Activated naive CD4-positive, alpha-beta T cell treated with anti-CD3 and anti-CD28 coated beads for 36 hours (primary cell): ENCODE measurements at regions of chr7 and their contacts with region 1.

Region 1: GRCh38 chr7:148914208-148914777 is 30.2 kb upstream of the EZH2 start:
- DNase-seq: peak; percentile 75
- H3K4me3 Mint-ChIP-seq: peak overlapping the region; percentile 61
- H3K27ac Mint-ChIP-seq: peak overlapping the region; percentile 96
- H3K4me1 Mint-ChIP-seq: peaks cover 71% of the 10 kb centered on the region
- H3K27me3 Mint-ChIP-seq: no peaks in the 10 kb centered on the region

Region 2: DNA sequence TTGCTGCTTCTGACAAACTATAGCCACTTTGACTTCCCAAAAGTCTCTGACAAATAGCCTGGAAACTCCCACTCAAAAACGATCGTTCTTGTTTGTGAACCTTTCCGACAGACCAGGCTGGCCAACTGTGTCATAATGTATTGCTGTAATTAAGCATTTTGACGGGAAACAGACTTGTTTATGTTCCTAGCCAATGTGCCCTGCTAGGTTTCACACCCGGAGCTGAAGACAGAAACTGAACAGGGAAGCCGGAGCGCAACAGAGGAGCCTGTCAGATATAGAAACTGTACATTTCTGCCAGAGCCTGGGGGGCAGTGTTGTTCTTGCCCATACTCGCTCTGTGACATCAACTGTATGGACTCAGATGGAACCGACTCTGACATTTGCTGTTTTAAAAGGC is 379.1 kb before region 1 on chr7:
- CTCF ChIA-PET with region 1: no interaction called
- intact Hi-C with region 1: loop called (anchors 1 kb)
- DNase-seq: peak; percentile 79
- H3K4me3 Mint-ChIP-seq: peak overlapping the region; percentile 69
- H3K27ac Mint-ChIP-seq: peak overlapping the region; percentile 76
- H3K4me1 Mint-ChIP-seq: peaks cover 10% of the 10 kb centered on the region
- H3K27me3 Mint-ChIP-seq: peaks cover 10% of the 10 kb centered on the region

Region 3: GRCh38 chr7:148727501-148728278 is 186.6 kb before region 1 on chr7:
- CTCF ChIA-PET with region 1: no interaction called
- intact Hi-C with region 1: loop called (anchors 1 kb)
- DNase-seq: peak; percentile 83
- H3K4me3 Mint-ChIP-seq: no peak overlapping the region
- H3K27ac Mint-ChIP-seq: peak overlapping the region; percentile 64
- H3K4me1 Mint-ChIP-seq: peaks cover 66% of the 10 kb centered on the region
- H3K27me3 Mint-ChIP-seq: no peaks in the 10 kb centered on the region

Region 4: DNA sequence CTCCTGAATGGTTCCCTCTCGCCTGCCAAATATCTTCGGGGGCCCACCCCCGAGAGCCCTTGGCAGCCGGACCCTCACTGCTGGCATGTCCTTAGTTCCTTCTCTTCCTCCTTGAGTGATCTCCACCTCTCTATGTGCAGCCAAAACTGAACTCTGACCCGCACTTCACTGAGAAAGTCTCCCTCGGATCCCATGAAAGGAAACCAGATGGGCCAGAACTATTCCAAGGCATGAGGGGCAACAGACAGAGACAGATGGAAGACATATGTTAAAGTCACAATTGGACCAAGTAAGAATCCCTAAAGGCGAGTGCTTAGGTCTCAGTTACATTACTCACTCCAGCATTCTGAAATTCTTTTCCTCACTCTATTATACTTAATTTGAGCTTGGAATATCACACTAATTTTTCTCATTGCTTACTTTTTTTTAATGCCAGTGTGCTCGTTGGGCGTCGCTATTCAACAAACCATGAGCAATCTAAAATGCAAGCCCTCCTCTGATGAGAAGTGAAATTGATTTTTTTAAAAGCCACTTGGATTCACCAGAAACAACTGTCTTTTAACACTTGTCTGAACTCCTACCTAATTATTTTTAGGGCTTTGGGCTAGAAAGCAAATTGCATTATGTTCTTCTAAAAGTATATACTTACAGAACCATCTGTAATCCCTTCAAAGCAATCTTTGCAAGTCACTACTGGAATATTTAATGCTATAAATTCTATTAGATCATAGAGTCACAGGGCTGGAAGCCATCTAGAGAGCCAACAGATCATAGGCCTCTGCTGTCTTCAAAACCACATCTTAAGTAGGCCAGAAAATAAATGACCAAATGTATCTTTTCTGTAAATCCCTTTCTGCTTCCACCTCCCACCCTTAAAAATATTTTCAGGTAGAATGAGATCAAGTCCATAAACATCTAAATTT is 13.1 kb after region 1 on chr7:
- CTCF ChIA-PET with region 1: interaction called, 22 read pairs
- intact Hi-C with region 1: loop called (anchors 1 kb)
- DNase-seq: no peak
- H3K4me3 Mint-ChIP-seq: peak overlapping the region; percentile 34
- H3K27ac Mint-ChIP-seq: peak overlapping the region; percentile 92
- H3K4me1 Mint-ChIP-seq: peaks cover 67% of the 10 kb centered on the region
- H3K27me3 Mint-ChIP-seq: no peaks in the 10 kb centered on the region

Region 5: GRCh38 chr7:148987010-148987750 is 72.9 kb after region 1 on chr7:
- CTCF ChIA-PET with region 1: no interaction called
- intact Hi-C with region 1: loop called (anchors 1 kb)
- DNase-seq: peak; percentile 88
- H3K4me3 Mint-ChIP-seq: peak overlapping the region; percentile 98
- H3K27ac Mint-ChIP-seq: peak overlapping the region; percentile 93
- H3K4me1 Mint-ChIP-seq: peaks cover 40% of the 10 kb centered on the region
- H3K27me3 Mint-ChIP-seq: peaks cover 7% of the 10 kb centered on the region

Region 6: DNA sequence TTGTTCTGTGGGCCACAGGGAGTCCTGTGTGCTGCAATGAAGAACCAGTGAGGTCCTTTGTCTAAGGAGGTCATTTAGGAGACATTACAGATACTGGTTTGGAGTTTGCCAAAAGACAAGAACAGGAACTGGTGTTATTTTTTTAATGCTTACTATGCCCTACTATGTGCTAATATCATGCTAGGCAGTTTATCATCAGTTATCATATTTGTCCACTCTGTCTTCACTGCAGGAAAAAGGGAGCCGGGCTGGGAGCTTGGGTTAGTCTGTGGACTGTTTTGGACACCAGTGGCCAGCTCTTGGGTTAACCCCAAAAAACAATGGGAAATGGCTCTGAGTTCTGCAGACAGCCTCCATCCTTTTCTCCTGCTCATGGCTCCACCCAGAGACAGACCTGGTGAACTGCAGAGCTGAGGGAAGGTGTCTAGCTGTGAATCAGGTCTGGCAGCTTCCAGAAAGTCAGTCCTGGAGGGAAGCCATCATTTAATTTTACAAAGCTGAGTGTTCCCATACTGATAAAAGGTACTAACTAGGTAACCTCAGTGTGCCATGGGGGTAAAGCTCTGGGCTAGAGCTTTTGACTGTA is 684.5 kb after region 1 on chr7:
- CTCF ChIA-PET with region 1: no interaction called
- intact Hi-C with region 1: loop called (anchors 1 kb)
- DNase-seq: peak; percentile 69
- H3K4me3 Mint-ChIP-seq: no peak overlapping the region
- H3K27ac Mint-ChIP-seq: peak overlapping the region; percentile 51
- H3K4me1 Mint-ChIP-seq: peaks cover 36% of the 10 kb centered on the region
- H3K27me3 Mint-ChIP-seq: no peaks in the 10 kb centered on the region